Testis (tissue), 5 donors: ENCODE measurements at regions of chr11 and their contacts with region 1.

Region 1: GRCh38 chr11:118689851-118690552 is 10.6 kb upstream of the TREH start:
- DNase-seq: peak; percentile 81
- H3K4me3 ChIP-seq: peak overlapping the region; percentile 25 to 39
- H3K27ac ChIP-seq: peak overlapping the region; percentile 74 to 79
- H3K4me1 ChIP-seq: peaks cover 11% of the 10 kb centered on the region
- H3K27me3 ChIP-seq: no peaks in the 10 kb centered on the region
- CTCF ChIP-seq: peak; percentile 69 to 94 (median 85)
- POLR2A ChIP-seq: no peak

Region 2: DNA sequence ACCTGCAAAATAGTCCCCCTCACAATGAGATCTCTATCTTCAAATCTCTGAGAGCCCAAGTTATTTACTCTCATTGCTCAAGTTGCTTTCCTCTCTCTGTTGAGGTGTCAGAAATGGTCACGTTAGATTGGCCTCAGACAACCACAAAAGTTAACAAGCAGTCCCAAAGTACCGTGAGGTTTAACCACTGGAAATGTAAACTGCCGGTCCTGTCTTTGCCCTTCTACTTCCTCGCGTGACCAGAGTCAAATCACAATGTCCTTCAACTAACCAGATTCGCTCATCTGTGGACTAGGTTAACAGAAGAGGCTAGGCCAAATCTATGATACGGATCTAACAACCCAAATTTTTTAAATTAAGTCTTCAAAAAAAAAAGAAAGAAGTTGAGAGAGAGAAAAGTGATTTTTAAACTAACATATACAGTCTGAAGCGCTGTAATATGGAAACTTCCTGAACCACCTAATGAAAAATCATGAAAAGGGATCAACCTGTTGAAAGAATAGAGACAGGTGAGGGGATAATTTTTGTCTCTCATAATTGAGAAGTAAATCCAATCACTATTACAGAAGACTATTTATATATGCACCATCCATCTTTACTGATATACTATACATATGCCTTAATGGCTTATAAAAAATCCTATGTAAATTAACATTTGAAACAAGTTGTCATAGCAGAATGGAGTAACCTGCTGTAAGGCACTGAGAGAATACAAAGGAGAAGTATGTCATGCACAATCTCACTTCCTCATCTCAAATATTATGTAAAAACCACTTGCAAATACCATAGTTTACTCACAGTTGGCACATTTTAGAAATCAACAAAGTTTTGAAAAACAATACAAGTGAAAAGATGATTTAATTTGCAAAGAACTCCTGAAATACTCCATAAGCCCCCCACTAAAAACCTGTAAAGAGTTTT is 461.9 kb before region 1 on chr11:
- intact Hi-C with region 1: no loop called
- DNase-seq: no peak
- H3K4me3 ChIP-seq: no peak overlapping the region
- H3K27ac ChIP-seq: no peak overlapping the region
- H3K4me1 ChIP-seq: no peaks in the 10 kb centered on the region
- H3K27me3 ChIP-seq: no peaks in the 10 kb centered on the region
- CTCF ChIP-seq: no peak
- POLR2A ChIP-seq: no peak

Region 3: GRCh38 chr11:118791111-118791965 is 101.3 kb after region 1 on chr11 and contains the start of gene DDX6:
- intact Hi-C with region 1: loop called (anchors 10 kb)
- DNase-seq: peak; percentile 86
- H3K4me3 ChIP-seq: peak within 1 kb of the TSS; percentile 90 to 92
- H3K27ac ChIP-seq: peak within 1 kb of the TSS; percentile 100
- H3K4me1 ChIP-seq: peaks cover 28% of the 10 kb centered on the region
- H3K27me3 ChIP-seq: no peaks in the 10 kb centered on the region
- CTCF ChIP-seq: peak in 1 of 3 experiments; percentile 39
- POLR2A ChIP-seq: peak; percentile 94
- total RNA-seq, gene DDX6: 105 to 124 TPM

Region 4: DNA sequence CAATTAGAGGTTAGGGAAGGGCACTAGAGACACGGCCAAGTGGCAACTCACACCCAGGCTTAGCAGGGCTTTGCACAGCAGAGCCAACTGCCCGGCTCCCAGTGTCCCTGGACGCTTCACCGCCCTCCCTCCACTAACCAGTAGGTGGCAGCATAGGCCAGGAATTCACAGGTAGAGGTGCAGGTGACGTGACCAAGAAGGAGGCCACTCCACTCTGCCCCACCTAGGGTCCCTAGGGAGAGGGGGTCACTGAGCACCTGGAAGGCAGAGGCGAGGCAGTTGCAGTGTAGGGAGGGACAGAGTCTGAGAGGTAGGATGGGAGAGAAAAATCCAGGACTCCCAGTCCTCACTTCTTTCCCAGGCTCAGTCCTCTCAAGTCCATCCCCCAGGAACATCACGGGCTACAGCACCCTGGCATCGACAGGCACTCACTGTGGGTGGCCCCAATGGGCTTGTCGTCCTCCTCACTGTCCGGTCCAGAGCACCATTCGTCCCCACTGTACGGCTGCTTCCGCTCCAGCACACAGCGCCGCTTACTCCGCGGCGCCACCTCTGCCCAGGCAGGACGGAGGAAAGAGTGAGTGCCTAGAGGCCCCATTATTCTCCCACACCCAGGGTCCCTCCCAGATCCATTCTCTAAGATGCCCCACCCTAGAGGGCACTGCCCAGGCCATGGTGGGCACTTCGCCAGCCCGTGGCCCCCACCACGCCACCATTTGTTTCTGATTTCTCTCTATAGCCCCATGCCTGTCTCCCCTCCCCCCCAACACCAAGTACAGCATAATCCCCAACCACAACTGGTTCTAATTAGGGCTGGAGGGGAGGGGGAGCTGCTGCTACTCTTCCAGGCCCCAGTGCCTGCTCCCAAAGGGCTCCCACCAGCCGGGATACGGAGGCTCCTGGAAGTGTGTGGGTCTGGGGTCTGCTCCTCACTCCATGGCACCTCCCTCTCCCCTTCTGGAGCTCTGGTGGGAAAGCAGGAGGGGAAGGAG is 217.3 kb after region 1 on chr11:
- intact Hi-C with region 1: loop called (anchors 10 kb)
- DNase-seq: peak; percentile 91
- H3K4me3 ChIP-seq: no peak overlapping the region
- H3K27ac ChIP-seq: peak overlapping the region; percentile 5 to 25
- H3K4me1 ChIP-seq: peaks cover 55% of the 10 kb centered on the region
- H3K27me3 ChIP-seq: no peaks in the 10 kb centered on the region
- CTCF ChIP-seq: peak; percentile 87 to 96 (median 95)
- POLR2A ChIP-seq: no peak

Region 5: DNA sequence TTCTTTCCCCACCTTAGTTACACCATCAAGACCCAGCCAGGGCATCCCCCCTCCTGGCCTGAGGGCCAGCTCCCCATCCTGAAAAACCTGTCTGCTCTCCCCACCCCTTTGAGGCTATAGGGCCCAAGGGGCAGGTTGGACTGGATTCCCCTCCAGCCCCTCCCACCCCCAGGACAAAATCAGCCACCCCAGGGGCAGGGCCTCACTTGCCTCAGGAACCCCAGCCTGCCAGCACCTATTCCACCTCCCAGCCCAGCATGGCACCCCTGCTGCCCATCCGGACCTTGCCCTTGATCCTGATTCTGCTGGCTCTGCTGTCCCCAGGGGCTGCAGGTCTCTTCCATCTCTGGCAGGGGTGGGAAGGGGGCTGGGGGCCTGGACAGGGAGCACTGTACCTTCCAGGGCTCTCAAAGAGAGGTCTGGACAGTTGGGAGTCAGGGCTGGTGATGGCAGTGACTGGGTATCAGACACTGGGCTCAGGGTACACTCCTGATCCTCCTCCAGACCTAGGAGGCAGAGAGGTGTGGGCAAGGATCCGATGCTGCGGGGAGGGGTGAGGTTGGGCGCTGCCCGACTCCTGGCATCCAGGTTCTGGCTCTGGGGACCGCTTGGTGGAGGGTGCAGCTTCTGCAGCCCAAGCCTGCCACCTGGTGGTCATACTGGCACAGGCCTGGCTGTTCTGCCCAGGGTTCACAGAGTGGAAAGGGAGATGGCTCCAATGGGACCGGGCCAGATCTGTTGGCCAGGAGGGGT is 266.3 kb after region 1 on chr11 and contains the start of gene UPK2:
- intact Hi-C with region 1: loop called (anchors 10 kb)
- DNase-seq: peak; percentile 91
- H3K4me3 ChIP-seq: no peak within 1 kb of the TSS
- H3K27ac ChIP-seq: no peak within 1 kb of the TSS
- H3K4me1 ChIP-seq: no peaks in the 10 kb centered on the region
- H3K27me3 ChIP-seq: no peaks in the 10 kb centered on the region
- CTCF ChIP-seq: peak; percentile 91 to 95 (median 94)
- POLR2A ChIP-seq: no peak
- total RNA-seq, gene UPK2: 0.68 TPM in 1 of 2 donors, not detected in the other